HEK293 (cell line): ENCODE measurements at regions of chr19 and their contacts with region 1.

Region 1: GRCh38 chr19:41872775-41873647 is 4.1 kb upstream of the CD79A start:
- H3K4me3 ChIP-seq: no peak overlapping the region
- H3K27ac ChIP-seq: no peak overlapping the region
- H3K4me1 ChIP-seq: no peaks in the 10 kb centered on the region; the same call in 1 of the 2 replicates
- CTCF ChIP-seq: peak; percentile 90

Region 2: GRCh38 chr19:41811036-41811435 is 62.0 kb before region 1 on chr19:
- CTCF ChIA-PET with region 1: no interaction called
- POLR2A ChIA-PET with region 1: no interaction called
- H3K4me3 ChIP-seq: no peak overlapping the region
- H3K27ac ChIP-seq: no peak overlapping the region
- H3K4me1 ChIP-seq: no peaks in the 10 kb centered on the region
- CTCF ChIP-seq: no peak

Region 3: GRCh38 chr19:41859618-41860418 is 13.2 kb before region 1 on chr19 and contains the start of gene RPS19:
- CTCF ChIA-PET with region 1: interaction called, 21 read pairs
- POLR2A ChIA-PET with region 1: interaction called, 118 read pairs
- H3K4me3 ChIP-seq: peak within 1 kb of the TSS; percentile 89
- H3K27ac ChIP-seq: peak within 1 kb of the TSS; percentile 100
- H3K4me1 ChIP-seq: peaks cover 27% of the 10 kb centered on the region
- CTCF ChIP-seq: peak; percentile 100

Region 4: DNA sequence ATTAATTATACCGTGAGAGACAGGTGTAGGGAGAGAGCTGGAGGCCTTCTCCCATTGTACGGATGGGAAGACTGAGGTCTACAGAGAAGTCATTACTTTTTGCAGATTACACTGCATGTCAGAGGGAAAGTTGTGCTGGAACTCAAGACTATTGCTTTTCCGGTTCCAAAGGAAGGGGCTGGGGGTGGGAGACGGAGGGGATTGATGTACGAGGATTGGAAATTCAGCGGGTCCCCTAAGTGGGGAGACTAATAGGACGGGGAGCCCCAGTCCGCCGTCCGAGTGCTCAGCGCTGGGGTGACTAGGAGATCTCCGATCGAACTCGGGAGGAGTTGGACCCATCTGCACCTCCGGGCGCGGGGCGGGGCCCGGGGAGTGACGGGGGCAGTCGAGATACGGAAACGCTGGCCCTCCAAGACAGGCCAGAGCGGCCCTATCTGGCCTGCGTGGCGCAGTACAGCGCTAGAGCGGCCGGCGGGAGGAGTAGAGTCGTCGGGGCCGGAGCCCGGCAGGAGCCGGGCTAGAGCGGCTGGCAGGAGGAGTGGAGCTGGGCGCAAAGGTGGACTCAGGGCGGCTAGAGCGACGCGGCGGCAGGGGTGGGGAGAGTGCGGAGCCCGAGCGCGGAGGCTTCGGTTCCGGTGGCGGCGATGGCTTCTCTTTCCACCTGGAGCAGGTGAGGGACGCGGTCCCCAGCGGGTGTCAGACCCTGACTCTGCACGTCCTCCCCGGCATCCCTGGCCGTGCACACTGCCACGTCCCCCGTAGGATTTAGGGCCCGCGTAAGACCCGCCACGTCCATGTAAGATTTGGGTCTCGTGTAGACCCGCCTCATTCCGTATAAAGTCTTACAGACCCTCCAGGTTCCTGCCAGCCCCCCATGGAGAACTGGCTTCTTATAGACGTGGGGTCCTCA is 11.1 kb after region 1 on chr19:
- CTCF ChIA-PET with region 1: interaction called, 22 read pairs
- POLR2A ChIA-PET with region 1: interaction called, 29 read pairs
- H3K4me3 ChIP-seq: peak overlapping the region; percentile 85
- H3K27ac ChIP-seq: peak overlapping the region; percentile 62; the same call in 1 of the 2 replicates
- H3K4me1 ChIP-seq: peaks cover 11% of the 10 kb centered on the region; the same call in 1 of the 2 replicates
- CTCF ChIP-seq: peak; percentile 78; the same call in 1 of the 2 replicates

Region 5: DNA sequence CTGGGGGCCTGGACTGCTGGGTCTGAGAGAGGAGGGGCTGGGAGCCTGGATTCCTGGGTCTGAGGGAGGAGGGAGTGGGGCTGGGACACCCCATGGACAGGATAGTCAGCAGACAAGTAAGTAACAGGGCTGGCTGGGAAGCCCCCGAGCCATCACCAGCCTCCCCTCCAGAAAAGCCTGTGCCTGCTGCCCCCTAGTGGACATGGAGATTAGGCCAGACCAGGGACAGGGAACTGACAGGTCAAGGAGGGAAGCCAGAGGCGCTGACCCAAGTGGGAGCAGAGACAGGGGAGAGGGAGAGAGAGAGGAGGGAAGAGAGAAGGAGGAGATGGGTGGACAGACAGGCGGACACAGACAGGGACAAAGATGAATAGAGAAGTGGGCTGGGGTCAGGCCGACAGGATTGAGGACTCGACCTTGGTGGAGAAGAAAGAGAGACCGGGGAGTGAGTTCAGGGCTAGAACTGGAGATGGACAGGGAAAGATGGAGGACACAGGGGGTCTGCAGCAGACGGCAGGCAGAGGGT is 61.9 kb after region 1 on chr19:
- CTCF ChIA-PET with region 1: interaction called, 22 read pairs
- POLR2A ChIA-PET with region 1: interaction called, 7 read pairs
- H3K4me3 ChIP-seq: no peak overlapping the region
- H3K27ac ChIP-seq: no peak overlapping the region
- H3K4me1 ChIP-seq: peaks cover 7% of the 10 kb centered on the region
- CTCF ChIP-seq: peak; percentile 96

Region 6: GRCh38 chr19:41945135-41945766 is 72.2 kb after region 1 on chr19:
- CTCF ChIA-PET with region 1: interaction called, 61 read pairs
- POLR2A ChIA-PET with region 1: interaction called, 17 read pairs
- H3K4me3 ChIP-seq: no peak overlapping the region
- H3K27ac ChIP-seq: no peak overlapping the region
- H3K4me1 ChIP-seq: no peaks in the 10 kb centered on the region; the same call in 1 of the 2 replicates
- CTCF ChIP-seq: no peak

Region 7: DNA sequence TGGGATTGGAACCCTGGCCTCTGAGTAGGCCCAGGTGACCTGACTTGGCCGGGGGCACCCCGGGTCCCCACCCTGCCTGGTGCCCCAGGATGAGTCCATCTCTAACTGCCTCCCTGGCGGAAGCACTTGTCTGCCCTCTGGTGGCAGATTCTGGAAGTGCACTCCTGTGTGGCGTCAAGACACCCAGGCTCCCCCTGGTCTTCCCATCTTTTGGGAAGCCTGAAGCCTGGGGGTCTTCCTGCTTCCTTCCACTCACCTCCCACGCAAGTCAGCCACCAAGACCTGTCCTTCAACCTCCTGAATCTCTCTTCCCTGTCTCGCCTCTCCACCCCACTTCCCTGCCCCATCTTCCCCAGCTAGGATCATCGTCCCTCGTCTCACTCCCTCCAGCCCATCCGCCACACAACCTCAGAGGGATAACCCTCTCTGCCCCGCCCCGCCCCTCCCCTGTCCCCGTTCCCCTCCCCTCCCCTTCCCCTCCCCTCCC is 78.7 kb after region 1 on chr19:
- CTCF ChIA-PET with region 1: interaction called, 73 read pairs
- POLR2A ChIA-PET with region 1: interaction called, 17 read pairs
- H3K4me3 ChIP-seq: no peak overlapping the region
- H3K27ac ChIP-seq: no peak overlapping the region
- H3K4me1 ChIP-seq: no peaks in the 10 kb centered on the region
- CTCF ChIP-seq: peak; percentile 95

Region 8: GRCh38 chr19:41959056-41960053 is 86.3 kb after region 1 on chr19 and contains the start of gene RABAC1:
- CTCF ChIA-PET with region 1: interaction called, 73 read pairs
- POLR2A ChIA-PET with region 1: interaction called, 56 read pairs
- H3K4me3 ChIP-seq: peak within 1 kb of the TSS; percentile 66
- H3K27ac ChIP-seq: peak within 1 kb of the TSS; percentile 90
- H3K4me1 ChIP-seq: peaks cover 10% of the 10 kb centered on the region
- CTCF ChIP-seq: peak; percentile 88